ENCODE measurements at regions of chr11 and their contacts with region 1.

Region 1: GRCh38 chr11:102007567-102008437 is 39.4 kb upstream of the CFAP300 start:
- DNase-seq: peak; percentile 44
- H3K4me3 Mint-ChIP-seq: no peak overlapping the region
- H3K27ac Mint-ChIP-seq: peak overlapping the region; percentile 48
- H3K4me1 Mint-ChIP-seq: peaks cover 28% of the 10 kb centered on the region
- H3K27me3 Mint-ChIP-seq: no peaks in the 10 kb centered on the region
- CTCF ChIP-seq: peak; percentile 45

Region 2: GRCh38 chr11:101848262-101848661 is 159.5 kb before region 1 on chr11:
- CTCF ChIA-PET with region 1: interaction called, 18 read pairs
- intact Hi-C with region 1: no loop called
- DNase-seq: no peak
- H3K4me3 Mint-ChIP-seq: no peak overlapping the region
- H3K27ac Mint-ChIP-seq: no peak overlapping the region
- H3K4me1 Mint-ChIP-seq: no peaks in the 10 kb centered on the region
- H3K27me3 Mint-ChIP-seq: no peaks in the 10 kb centered on the region
- CTCF ChIP-seq: no peak

Region 3: GRCh38 chr11:101860696-101861427 is 146.9 kb before region 1 on chr11:
- CTCF ChIA-PET with region 1: interaction called, 69 read pairs
- intact Hi-C with region 1: loop called (anchors 1 kb)
- DNase-seq: peak; percentile 30
- H3K4me3 Mint-ChIP-seq: no peak overlapping the region
- H3K27ac Mint-ChIP-seq: no peak overlapping the region
- H3K4me1 Mint-ChIP-seq: peaks cover 15% of the 10 kb centered on the region
- H3K27me3 Mint-ChIP-seq: no peaks in the 10 kb centered on the region
- CTCF ChIP-seq: peak; percentile 30

Region 4: GRCh38 chr11:101914738-101915426 is 92.9 kb before region 1 on chr11 and contains the start of gene CEP126:
- CTCF ChIA-PET with region 1: interaction called, 17 read pairs
- intact Hi-C with region 1: loop called (anchors 2 kb)
- DNase-seq: peak; percentile 89
- H3K4me3 Mint-ChIP-seq: peak within 1 kb of the TSS; percentile 100
- H3K27ac Mint-ChIP-seq: peak within 1 kb of the TSS; percentile 96
- H3K4me1 Mint-ChIP-seq: peaks cover 21% of the 10 kb centered on the region
- H3K27me3 Mint-ChIP-seq: no peaks in the 10 kb centered on the region
- CTCF ChIP-seq: no peak
- total RNA-seq, gene CEP126: 3.1 and 3.8 TPM in 2 replicates

Region 5: DNA sequence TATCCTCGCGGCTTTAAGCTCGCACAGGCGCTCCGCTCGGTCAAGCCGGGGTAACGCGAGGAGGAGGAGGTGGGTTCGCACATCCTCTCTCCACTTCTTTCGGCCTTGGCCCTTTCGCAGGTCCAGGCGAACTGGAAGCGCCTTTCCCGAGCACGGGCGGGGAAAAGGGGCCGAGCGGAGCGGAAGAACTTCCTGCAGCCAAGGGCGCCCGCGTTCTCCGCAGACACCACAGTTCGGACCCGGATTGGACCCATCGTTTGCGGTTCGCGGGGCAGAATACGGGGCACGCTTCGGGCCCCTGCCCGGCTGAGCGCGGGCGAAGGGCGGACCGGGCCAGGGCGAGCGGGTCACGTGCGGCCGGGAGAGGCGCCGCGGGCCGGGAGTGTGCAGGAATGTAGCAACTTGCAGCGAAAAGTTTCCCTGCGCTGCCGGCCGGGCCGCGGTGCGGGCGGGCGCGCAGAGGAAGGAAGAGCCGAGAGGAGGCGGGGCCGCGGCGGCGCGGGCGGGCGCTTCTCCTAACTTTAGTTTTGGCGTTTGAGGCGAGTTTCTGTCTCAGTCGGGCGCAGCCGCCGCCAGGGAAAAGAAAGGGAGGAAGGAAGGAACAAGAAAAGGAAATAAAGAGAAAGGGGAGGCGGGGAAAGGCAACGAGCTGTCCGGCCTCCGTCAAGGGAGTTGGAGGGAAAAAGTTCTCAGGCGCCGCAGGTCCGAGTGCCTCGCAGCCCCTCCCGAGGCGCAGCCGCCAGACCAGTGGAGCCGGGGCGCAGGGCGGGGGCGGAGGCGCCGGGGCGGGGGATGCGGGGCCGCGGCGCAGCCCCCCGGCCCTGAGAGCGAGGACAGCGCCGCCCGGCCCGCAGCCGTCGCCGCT is 102.3 kb after region 1 on chr11 and contains the start of gene YAP1:
- CTCF ChIA-PET with region 1: interaction called, 3 read pairs
- intact Hi-C with region 1: loop called (anchors 2 kb)
- DNase-seq: peak; percentile 85
- H3K4me3 Mint-ChIP-seq: peak within 1 kb of the TSS; percentile 99
- H3K27ac Mint-ChIP-seq: peak within 1 kb of the TSS; percentile 99
- H3K4me1 Mint-ChIP-seq: peaks cover 7% of the 10 kb centered on the region
- H3K27me3 Mint-ChIP-seq: no peaks in the 10 kb centered on the region
- CTCF ChIP-seq: no peak
- total RNA-seq, gene YAP1: 57.5 and 64.7 TPM in 2 replicates

Region 6: DNA sequence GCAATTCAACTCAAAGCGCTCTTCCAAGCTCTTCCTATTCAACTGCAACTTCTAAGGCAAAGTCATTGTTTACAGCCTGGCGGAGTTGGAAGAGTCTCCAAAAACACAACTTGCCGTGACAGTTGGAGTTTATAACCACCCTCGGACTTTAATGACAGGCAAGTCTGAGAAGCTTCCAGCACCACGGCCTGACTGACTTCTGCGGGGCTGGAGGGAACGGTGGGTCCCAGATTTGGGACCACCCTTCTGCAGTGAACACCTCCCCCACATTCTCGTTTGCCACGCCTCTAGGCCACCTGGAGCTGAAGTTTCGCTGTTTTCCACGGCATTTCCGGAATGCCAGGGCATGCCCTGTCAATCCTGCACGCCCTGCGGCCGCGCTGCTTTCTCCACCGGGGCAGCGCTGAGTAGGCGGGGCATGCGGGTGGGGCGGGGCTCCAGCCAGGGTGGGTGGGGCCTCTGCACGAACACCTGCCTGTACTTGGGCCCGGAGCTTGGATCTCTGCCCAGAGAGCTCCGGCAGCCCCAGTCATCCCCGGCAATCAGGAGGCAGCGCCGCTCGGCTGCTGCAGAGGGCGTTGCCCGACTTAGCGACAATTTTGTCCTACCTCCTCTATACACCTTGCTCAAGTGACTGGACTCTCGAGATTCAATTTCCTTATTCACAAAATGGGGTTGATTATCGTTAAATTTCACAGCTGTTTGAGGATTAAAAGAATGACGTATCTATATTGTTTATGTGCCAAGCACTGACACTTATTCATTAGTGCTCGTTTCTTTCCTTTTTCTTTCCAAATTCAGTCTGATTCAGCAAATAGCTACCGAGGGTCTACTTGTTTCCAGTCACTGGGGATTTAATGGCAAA is 260.8 kb after region 1 on chr11:
- CTCF ChIA-PET with region 1: interaction called, 7 read pairs
- intact Hi-C with region 1: loop called (anchors 2 kb)
- DNase-seq: peak; percentile 90
- H3K4me3 Mint-ChIP-seq: peak overlapping the region; percentile 73
- H3K27ac Mint-ChIP-seq: peak overlapping the region; percentile 87
- H3K4me1 Mint-ChIP-seq: peaks cover 35% of the 10 kb centered on the region
- H3K27me3 Mint-ChIP-seq: no peaks in the 10 kb centered on the region
- CTCF ChIP-seq: no peak

Region 7: DNA sequence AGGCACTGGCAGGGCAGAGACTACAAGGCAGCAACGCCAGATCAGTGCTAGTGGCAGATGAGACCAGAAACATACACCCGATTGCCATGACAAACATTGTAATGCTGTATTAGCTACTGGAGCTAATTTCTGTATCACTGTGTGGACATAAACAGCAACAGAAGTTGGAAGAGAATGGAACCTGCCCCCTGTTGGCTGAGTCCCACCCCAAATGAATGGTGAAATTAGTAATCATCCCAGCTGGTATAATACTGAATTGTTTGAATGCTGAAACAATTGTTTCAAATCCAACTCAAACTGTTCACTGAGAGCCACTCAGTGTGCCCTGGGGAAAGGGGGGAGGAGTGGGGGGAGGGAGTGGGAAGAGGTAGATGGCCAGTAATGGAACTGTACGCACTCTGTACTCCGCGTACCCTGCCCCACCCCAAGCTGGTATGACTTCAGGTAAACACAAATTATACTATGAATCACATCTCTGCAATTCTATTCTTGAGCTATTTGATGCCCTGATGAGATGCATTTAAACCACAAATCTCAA is 298.3 kb after region 1 on chr11:
- CTCF ChIA-PET with region 1: interaction called, 16 read pairs
- intact Hi-C with region 1: no loop called
- DNase-seq: peak; percentile 80
- H3K4me3 Mint-ChIP-seq: peak overlapping the region; percentile 52
- H3K27ac Mint-ChIP-seq: peak overlapping the region; percentile 87
- H3K4me1 Mint-ChIP-seq: peaks cover 39% of the 10 kb centered on the region
- H3K27me3 Mint-ChIP-seq: no peaks in the 10 kb centered on the region
- CTCF ChIP-seq: peak; percentile 26

Measured in Calu3 (cell line).